HepG2 (cell line): ENCODE measurements at regions of chr9 and their contacts with region 1.

Region 1: GRCh38 chr9:112166172-112167140 is 8.6 kb downstream of the SUSD1 start:
- DNase-seq: peak; percentile 47
- ATAC-seq: peak; percentile 74
- H3K4me3 ChIP-seq: no peak overlapping the region
- H3K27ac ChIP-seq: peak overlapping the region; percentile 28
- H3K4me1 ChIP-seq: peaks cover 80% of the 10 kb centered on the region
- H3K27me3 ChIP-seq: no peaks in the 10 kb centered on the region
- CTCF ChIP-seq: peak; percentile 39
- EP300 ChIP-seq: no peak
- POLR2A ChIP-seq: no peak
- RAD21 ChIP-seq: no peak

Region 2: DNA sequence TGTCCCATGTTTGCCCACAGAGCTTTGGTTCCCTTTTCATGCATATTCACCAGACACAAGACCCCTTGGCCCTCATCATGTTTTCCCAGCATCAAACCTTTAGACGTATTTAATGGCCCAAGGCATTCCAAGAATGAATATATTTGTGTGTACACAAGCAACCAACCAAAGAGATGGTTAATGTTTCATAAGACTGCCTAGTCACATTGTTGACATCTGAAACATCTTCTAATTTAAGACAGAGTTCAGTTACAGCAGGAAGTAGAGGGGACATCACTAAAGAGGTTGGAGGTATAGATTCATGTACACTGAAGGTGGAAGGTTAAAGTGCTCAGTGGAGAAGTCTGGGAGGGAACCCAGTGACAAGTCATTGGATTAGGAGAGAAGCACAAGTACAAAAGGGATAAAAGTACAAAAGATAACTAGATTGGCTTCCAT is 40.5 kb before region 1 on chr9:
- CTCF ChIA-PET with region 1: no interaction called
- POLR2A ChIA-PET with region 1: no interaction called
- in situ Hi-C with region 1: no loop called
- intact Hi-C with region 1: loop called (anchors 5 kb)
- DNase-seq: peak; percentile 40
- ATAC-seq: peak; percentile 47
- H3K4me3 ChIP-seq: no peak overlapping the region
- H3K27ac ChIP-seq: no peak overlapping the region
- H3K4me1 ChIP-seq: peaks cover 67% of the 10 kb centered on the region
- H3K27me3 ChIP-seq: no peaks in the 10 kb centered on the region
- CTCF ChIP-seq: no peak
- EP300 ChIP-seq: peak in 1 of 2 experiments; percentile 77; a peak in 1 of 4 replicates
- POLR2A ChIP-seq: no peak
- RAD21 ChIP-seq: no peak

Region 3: DNA sequence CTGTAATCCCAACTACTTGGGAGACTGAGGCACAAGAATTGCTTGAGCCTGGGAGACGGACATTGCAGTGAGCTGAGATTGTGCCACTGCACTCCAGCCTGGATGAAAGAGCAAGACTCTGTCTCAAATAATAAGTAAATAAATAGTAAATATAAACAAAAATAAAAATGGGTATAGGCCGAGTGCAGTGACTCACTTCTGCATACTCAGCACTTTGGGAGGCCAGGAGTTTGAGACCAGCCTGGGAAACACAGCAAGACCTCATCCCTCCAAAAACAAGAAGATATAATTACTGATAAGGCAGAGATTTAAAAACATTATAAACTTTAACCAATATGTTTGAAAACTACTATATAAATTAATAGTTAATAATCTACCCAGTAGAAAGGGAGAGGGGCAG is 46.5 kb after region 1 on chr9:
- CTCF ChIA-PET with region 1: no interaction called
- POLR2A ChIA-PET with region 1: no interaction called
- in situ Hi-C with region 1: no loop called
- intact Hi-C with region 1: loop called (anchors 5 kb)
- DNase-seq: no peak
- ATAC-seq: no peak
- H3K4me3 ChIP-seq: no peak overlapping the region
- H3K27ac ChIP-seq: no peak overlapping the region
- H3K4me1 ChIP-seq: peaks cover 19% of the 10 kb centered on the region
- H3K27me3 ChIP-seq: no peaks in the 10 kb centered on the region
- CTCF ChIP-seq: no peak
- EP300 ChIP-seq: no peak
- POLR2A ChIP-seq: no peak
- RAD21 ChIP-seq: no peak